ENCODE measurements at regions of chr4 and their contacts with region 1.

Region 1: GRCh38 chr4:575281-576141 is 584 bp downstream of the TMEM271 start:
- DNase-seq: peak; percentile 59

Region 2: DNA sequence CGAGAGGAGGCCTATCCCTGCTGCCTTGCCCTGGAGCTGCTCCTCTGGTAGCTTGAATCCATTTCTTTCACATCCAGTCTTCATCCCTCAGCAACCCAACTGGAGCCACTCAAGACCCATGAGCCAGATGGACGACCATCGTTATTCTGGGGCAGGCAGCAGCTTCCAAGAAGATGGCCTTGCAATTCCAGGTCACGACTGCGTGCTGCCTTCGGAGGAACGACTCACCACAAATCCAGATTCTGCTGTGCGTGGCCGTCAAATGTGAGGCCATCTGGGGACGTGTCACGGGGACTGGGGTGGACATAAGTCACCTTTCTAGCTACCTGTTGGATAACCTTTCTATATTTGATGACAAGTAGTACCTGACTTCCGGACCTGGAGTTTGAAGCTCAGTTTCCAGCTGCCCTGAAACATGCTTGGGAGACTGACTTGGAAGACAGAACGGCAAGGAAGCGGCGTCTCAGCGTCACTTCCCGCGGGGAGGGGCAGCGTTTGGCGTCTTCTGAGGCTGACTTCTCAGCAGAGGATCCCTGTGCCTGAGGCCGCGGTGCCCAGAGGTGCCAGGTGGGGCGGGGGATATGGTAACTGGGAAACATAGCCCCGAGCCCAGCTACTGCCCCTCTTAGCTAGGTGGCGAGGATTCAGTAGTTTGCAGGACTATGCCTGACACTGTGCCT is 12.3 kb after region 1 on chr4:
- CTCF ChIA-PET with region 1: no interaction called
- POLR2A ChIA-PET with region 1: interaction called, 11 read pairs
- DNase-seq: no peak

Region 3: GRCh38 chr4:609400-610050 is 34.0 kb after region 1 on chr4:
- CTCF ChIA-PET with region 1: no interaction called
- POLR2A ChIA-PET with region 1: no interaction called
- DNase-seq: no peak